ENCODE measurements at regions of chr15 and their contacts with region 1.

Region 1: DNA sequence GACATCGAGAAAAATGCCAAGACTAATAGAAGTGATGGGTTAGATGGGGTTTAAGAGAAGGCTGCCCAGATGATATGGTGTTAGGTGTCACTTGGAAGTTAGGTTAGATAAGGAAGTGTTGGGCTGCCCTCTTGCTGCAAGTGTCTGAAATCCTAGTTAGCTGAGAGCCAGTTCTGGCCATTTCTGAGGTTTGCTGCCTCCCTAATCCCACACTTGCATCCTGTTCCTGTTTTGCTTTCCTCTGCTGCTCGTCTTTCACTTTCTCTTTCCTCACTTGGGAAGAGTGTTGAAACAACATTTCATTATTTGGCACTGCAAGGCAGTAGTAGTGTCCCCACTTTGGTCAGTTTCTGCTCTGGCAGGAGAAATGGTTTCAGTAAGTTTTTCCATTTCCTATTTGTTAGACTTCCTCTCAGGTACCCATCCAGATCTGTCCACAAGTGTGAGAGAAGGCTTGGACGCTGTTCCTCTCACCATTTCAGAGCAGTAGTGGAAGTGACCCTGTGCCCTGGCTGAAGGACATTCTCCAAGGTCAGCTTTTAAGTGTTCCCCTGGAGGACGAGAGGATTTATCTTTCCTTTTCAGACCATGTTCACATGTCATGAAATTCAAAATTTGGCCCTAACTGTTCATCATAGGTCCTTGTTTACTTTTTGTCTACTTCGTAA is 93.3 kb downstream of the ADAMTSL3 start:
- DNase-seq: no peak
- ATAC-seq: peak; percentile 91
- H3K4me3 ChIP-seq: peak overlapping the region in 1 of 2 donors; percentile 63
- H3K27ac ChIP-seq: peak overlapping the region; percentile 85 to 89
- H3K4me1 ChIP-seq: peaks cover 0 to 3% of the 10 kb centered on the region in 2 donors
- H3K27me3 ChIP-seq: no peaks in the 10 kb centered on the region

Region 2: DNA sequence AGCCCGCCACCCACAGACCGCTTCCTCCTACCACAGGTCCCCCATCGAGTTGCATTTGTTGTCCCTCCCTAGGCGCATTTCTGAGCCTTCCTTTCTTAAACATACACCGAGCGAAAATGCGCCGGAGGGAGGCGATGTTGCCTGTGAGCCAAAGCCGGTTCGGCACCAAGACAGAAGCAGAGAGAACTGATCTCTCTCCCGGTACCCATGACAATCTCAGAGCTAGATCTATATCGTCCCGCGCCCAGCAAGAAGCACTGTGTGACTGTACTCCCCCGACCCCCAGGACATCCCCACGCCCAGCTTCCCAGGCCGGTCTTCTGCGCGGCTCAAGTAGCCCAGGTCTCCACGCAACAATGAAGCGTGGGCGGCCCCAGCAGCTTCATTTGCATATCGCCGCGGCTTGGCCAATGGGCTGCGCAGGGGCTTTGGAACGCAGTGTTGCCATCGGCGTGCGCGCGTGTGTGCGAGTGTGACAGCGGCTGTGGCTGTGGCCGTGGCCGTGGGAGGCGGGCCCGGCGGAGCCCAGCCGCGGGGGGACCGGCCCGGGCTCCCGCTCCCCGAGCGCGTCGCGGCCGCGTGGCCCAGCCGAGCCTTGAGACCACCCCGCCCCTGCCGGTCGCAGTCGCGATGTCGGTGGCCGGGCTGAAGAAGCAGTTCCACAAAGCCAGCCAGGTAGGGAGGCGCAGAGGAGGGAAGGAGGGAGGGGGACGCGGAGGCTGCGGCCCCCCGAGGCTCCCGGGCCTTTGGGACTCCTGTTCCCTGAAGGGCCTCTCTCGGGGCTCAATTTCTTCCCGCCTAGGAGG is 300.1 kb before region 1 on chr15 and contains the start of gene SH3GL3:
- intact Hi-C with region 1: loop called in 1 of 2 experiments (anchors 10 kb)
- DNase-seq: peak; percentile 85 to 95
- ATAC-seq: peak; percentile 94
- H3K4me3 ChIP-seq: peak within 1 kb of the TSS; percentile 5 to 70
- H3K27ac ChIP-seq: no peak within 1 kb of the TSS
- H3K4me1 ChIP-seq: no peaks in the 10 kb centered on the region
- H3K27me3 ChIP-seq: no peaks in the 10 kb centered on the region
- total RNA-seq, gene SH3GL3: 0.48 to 0.62 TPM

Region 3: GRCh38 chr15:83559310-83559966 is 187.7 kb before region 1 on chr15:
- intact Hi-C with region 1: loop called in 1 of 2 experiments (anchors 10 kb)
- DNase-seq: no peak
- ATAC-seq: peak; percentile 76
- H3K4me3 ChIP-seq: no peak overlapping the region
- H3K27ac ChIP-seq: no peak overlapping the region
- H3K4me1 ChIP-seq: no peaks in the 10 kb centered on the region
- H3K27me3 ChIP-seq: peaks cover 0 to 2% of the 10 kb centered on the region in 2 donors

Region 4: DNA sequence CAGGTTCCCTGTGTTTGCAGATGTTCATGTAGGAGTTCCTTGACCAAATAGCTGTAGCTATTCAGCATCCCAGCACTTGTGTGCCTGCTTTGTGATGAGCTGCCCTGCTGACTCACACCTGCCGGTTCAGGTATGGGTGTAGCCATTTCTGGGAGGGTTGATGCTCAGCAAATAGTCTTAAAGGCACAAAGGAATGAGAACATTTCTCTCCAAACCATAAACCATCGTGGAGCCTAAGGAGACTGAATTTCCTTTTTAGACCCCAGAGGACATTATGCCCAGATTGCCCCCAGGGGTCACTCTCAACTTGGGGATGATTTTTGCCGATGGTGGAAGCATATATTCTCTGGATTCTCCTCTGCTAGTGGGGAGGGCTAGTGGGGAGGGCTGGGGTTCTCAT is 12.7 kb before region 1 on chr15:
- intact Hi-C with region 1: no loop called
- DNase-seq: no peak
- ATAC-seq: no peak
- H3K4me3 ChIP-seq: no peak overlapping the region
- H3K27ac ChIP-seq: no peak overlapping the region
- H3K4me1 ChIP-seq: no peaks in the 10 kb centered on the region
- H3K27me3 ChIP-seq: no peaks in the 10 kb centered on the region